ENCODE measurements at regions of chr1 and their contacts with region 1.

Region 1: GRCh38 chr1:79353224-79353623 is 346.7 kb upstream of the ADGRL4 start:
- DNase-seq: no peak
- H3K4me3 ChIP-seq: no peak overlapping the region
- H3K27ac ChIP-seq: no peak overlapping the region
- H3K4me1 ChIP-seq: no peaks in the 10 kb centered on the region
- H3K27me3 ChIP-seq: no peaks in the 10 kb centered on the region
- CTCF ChIP-seq: no peak

Region 2: GRCh38 chr1:78839704-78840277 is 513.4 kb before region 1 on chr1:
- intact Hi-C with region 1: loop called (anchors 5 kb)
- DNase-seq: peak; percentile 25
- H3K4me3 ChIP-seq: no peak overlapping the region
- H3K27ac ChIP-seq: no peak overlapping the region
- H3K4me1 ChIP-seq: no peaks in the 10 kb centered on the region
- H3K27me3 ChIP-seq: no peaks in the 10 kb centered on the region
- CTCF ChIP-seq: peak; percentile 61

Measured in colonic mucosa (tissue), 4 donors.